BJ (cell line): ENCODE measurements at regions of chr4 and their contacts with region 1.

Region 1: GRCh38 chr4:118888666-118889311 is at the start of gene SYNPO2:
- DNase-seq: peak; percentile 43
- H3K4me3 ChIP-seq: peak within 1 kb of the TSS; percentile 64
- H3K27me3 ChIP-seq: no peaks in the 10 kb centered on the region
- CTCF ChIP-seq: no peak
- polyA plus RNA-seq, gene SYNPO2: 33.8 and 39.9 TPM in 2 replicates

Region 2: GRCh38 chr4:118920247-118920646 is 31.5 kb after region 1 on chr4:
- CTCF ChIA-PET with region 1: no interaction called
- POLR2A ChIA-PET with region 1: interaction called, 17 read pairs
- DNase-seq: no peak
- H3K4me3 ChIP-seq: no peak overlapping the region
- H3K27me3 ChIP-seq: no peaks in the 10 kb centered on the region
- CTCF ChIP-seq: no peak

Region 3: DNA sequence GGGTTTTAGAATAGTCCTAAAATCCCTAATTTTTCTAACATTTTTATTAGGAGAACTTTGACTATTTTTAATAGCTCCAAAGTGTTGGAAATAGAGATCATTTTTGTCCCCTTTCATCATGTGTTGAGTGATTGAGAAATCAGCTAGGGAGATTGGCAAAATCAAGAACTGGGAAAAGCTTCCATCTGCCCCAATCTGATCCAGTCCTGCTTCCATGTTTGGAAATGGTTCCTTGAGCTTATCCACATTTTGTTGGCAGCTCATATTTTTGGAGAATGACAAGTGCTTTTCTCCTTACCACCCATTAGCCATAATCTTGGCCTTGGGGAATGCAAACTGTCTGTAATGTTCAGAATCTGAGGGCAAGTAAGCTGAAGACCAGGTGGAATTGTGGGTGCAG is 73.8 kb after region 1 on chr4:
- CTCF ChIA-PET with region 1: interaction called, 34 read pairs
- POLR2A ChIA-PET with region 1: no interaction called
- DNase-seq: no peak
- H3K4me3 ChIP-seq: no peak overlapping the region
- H3K27me3 ChIP-seq: no peaks in the 10 kb centered on the region
- CTCF ChIP-seq: no peak

Region 4: DNA sequence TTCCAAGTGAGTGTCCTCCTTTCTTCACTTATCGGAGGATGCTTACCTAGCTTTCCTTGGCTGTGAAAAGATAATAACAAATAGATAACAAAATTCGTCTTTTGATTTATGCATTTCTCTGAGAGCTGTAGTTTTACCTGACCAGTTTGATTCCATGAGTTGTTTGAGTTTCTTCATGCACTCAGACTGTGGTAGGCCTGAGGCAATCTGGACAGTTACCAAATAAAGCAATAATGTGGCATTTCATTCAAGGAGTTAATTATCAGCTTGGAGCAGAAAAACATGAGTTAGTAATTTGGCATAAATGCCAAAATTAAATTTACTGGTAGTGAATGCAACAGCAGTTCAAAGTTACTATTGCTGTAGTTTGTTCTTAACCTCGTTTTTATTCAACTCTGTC is 379.7 kb after region 1 on chr4:
- CTCF ChIA-PET with region 1: no interaction called
- POLR2A ChIA-PET with region 1: no interaction called
- DNase-seq: no peak
- H3K4me3 ChIP-seq: no peak overlapping the region
- H3K27me3 ChIP-seq: no peaks in the 10 kb centered on the region
- CTCF ChIP-seq: no peak